Activated naive CD4-positive, alpha-beta T cell treated with anti-CD3 and anti-CD28 coated beads for 36 hours (primary cell): ENCODE measurements at regions of chr22 and their contacts with region 1.

Region 1: GRCh38 chr22:46791201-46791731 is 28.8 kb downstream of the TBC1D22A start:
- DNase-seq: peak; percentile 89
- H3K4me3 Mint-ChIP-seq: peak overlapping the region; percentile 84
- H3K27ac Mint-ChIP-seq: peak overlapping the region; percentile 99
- H3K4me1 Mint-ChIP-seq: peaks cover 40% of the 10 kb centered on the region
- H3K27me3 Mint-ChIP-seq: no peaks in the 10 kb centered on the region

Region 2: GRCh38 chr22:46604306-46604690 is 187.0 kb before region 1 on chr22:
- CTCF ChIA-PET with region 1: no interaction called
- intact Hi-C with region 1: loop called (anchors 1 kb)
- DNase-seq: peak; percentile 94
- H3K4me3 Mint-ChIP-seq: peak overlapping the region; percentile 67
- H3K27ac Mint-ChIP-seq: peak overlapping the region; percentile 95
- H3K4me1 Mint-ChIP-seq: peaks cover 15% of the 10 kb centered on the region
- H3K27me3 Mint-ChIP-seq: no peaks in the 10 kb centered on the region

Region 3: DNA sequence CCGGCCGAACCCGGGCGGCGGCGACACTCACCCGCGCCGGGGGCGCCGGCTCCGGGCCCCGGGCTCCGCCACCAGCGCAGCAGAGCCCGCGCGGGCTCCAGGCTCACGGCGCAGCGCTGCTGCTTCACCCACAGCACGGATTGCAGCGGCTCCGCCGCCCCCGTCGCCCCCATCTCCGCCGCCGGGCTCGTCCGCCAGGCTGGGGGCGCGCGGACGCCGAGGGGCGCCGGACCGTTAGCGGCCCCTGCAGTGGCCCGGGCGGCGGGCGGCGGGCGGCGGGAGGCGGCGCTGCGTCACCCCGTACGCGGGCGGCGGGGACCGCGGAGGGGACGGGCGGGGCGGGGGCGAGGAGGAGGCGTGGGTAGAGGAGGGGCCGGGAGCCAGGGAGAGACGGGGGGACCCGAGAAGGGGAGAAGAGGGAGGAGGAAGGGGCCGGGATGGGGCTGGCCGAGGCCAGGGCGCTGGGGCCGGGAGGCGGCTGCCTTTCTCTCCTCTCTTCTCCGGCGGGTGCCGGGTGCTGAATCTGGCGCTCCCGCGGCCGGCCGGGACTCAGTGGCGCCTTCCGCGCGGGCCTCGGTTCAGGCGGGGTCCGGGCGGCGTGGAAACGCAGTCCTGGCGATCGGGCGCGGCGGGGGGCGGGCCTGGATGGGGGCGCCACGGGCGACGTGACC is 53.2 kb before region 1 on chr22 and contains the start of gene CERK:
- CTCF ChIA-PET with region 1: no interaction called
- intact Hi-C with region 1: loop called (anchors 1 kb)
- DNase-seq: peak; percentile 72
- H3K4me3 Mint-ChIP-seq: peak within 1 kb of the TSS; percentile 100
- H3K27ac Mint-ChIP-seq: peak within 1 kb of the TSS; percentile 99
- H3K4me1 Mint-ChIP-seq: peaks cover 40% of the 10 kb centered on the region
- H3K27me3 Mint-ChIP-seq: no peaks in the 10 kb centered on the region
- total RNA-seq, gene CERK: 32.6 to 34.9 TPM

Region 4: DNA sequence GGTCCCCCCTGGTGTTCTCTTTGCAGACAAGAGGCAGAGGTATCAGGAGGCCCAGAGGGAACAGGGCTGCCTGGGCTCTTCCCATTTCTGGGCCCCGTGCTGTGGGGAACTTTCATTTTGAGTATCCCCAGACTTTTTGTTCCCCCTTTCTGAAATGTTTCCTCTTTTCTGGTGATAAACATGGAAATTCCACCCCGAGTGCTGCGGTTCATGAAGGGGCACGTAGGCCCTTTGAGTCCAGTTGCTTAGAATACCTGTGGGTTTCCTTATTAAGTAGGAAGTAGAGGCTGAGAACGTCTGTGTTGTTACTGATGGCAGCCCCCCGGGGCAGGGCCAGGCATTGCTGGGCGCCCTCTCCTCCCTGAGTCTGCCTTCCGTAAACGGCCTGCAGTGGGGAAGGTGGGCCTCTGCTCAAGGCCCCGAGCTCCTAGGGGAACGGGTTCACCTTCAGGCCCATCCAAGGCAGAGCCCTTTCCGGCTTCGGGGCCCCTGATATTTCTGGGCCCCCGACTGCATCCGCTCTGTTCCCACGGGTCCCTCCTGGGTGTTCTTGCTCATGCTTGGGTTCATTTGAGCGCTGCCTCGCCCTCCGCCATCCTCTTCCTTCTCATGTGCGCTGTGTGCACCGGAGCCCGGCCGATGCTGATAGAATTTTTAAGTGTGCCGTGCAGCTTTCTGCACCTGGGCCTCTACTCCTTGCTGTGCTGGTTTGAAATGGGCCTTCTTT is 16.9 kb before region 1 on chr22:
- CTCF ChIA-PET with region 1: interaction called, 3 read pairs
- intact Hi-C with region 1: loop called (anchors 2 kb)
- DNase-seq: peak; percentile 26
- H3K4me3 Mint-ChIP-seq: peak overlapping the region; percentile 42
- H3K27ac Mint-ChIP-seq: peak overlapping the region; percentile 90
- H3K4me1 Mint-ChIP-seq: peaks cover 74% of the 10 kb centered on the region
- H3K27me3 Mint-ChIP-seq: no peaks in the 10 kb centered on the region

Region 5: GRCh38 chr22:46813816-46814597 is 22.7 kb after region 1 on chr22:
- CTCF ChIA-PET with region 1: no interaction called
- intact Hi-C with region 1: no loop called
- DNase-seq: no peak
- H3K4me3 Mint-ChIP-seq: no peak overlapping the region
- H3K27ac Mint-ChIP-seq: no peak overlapping the region
- H3K4me1 Mint-ChIP-seq: peaks cover 29% of the 10 kb centered on the region
- H3K27me3 Mint-ChIP-seq: no peaks in the 10 kb centered on the region

Region 6: GRCh38 chr22:46854125-46854870 is 63.0 kb after region 1 on chr22:
- CTCF ChIA-PET with region 1: no interaction called
- intact Hi-C with region 1: no loop called
- DNase-seq: no peak
- H3K4me3 Mint-ChIP-seq: no peak overlapping the region
- H3K27ac Mint-ChIP-seq: no peak overlapping the region
- H3K4me1 Mint-ChIP-seq: peaks cover 11% of the 10 kb centered on the region
- H3K27me3 Mint-ChIP-seq: no peaks in the 10 kb centered on the region